CD14-positive monocyte (primary cell): ENCODE measurements at regions of chr22 and their contacts with region 1.

Region 1: DNA sequence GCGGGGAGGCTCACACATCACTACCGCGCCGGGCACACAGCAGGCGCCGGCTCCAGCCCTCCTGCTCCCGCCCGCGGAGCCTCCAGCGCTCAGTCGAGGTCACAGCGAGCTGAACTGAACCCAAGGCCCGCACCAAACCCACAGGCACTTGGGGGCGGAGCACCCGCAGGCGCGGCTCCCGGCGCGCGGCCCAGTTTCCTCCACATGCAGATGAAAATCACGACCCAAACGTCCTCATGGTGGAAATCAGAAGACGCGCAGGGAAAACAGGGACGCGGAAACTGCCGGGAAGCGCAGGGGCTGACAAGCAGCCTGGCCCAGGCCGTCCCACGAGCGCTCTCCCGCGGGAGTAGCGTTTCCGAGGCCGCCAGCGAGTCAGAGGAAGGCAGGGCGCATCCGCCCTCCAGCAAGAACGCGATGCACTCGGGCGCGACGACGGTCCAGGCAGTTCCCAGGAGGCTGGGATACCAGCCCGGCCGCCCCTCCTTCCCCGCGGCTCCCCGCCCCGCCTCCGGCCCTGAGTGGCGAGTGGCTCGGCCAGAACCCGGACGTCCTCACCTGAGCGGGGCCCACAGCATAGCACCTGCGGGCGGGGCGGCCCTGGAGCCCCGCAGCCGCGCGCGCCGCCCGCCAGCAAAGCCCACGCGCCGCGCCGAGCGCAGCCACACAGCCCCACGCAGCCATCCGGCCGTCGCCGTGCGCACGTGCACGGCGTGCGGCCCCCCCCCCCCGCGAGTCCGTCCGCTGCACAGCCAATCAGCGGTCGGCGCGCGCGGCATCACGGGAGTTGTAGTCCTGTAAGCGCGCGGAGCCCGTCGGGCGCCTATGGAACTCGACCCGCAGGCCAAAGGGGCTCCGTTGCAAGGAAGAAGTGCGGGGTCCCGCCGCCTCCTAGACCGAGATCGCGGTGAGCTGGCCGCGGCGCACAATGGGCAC is at the start of gene HDHD5:
- DNase-seq: peak; percentile 78 to 85 (median 81)
- H3K4me3 ChIP-seq: peak within 1 kb of the TSS; percentile 60 to 82 (median 62)
- H3K4me3 Mint-ChIP-seq: peak within 1 kb of the TSS; percentile 83 to 88
- H3K27ac ChIP-seq: peak within 1 kb of the TSS; percentile 80 to 86
- H3K27ac Mint-ChIP-seq: peak within 1 kb of the TSS; percentile 79 to 95 (median 91)
- H3K4me1 ChIP-seq: peaks cover 59 to 64% of the 10 kb centered on the region in 2 donors
- H3K4me1 Mint-ChIP-seq: peaks cover 57% of the 10 kb centered on the region
- H3K27me3 ChIP-seq: no peaks in the 10 kb centered on the region
- H3K27me3 Mint-ChIP-seq: peaks cover 0 to 3% (median 0%) of the 10 kb centered on the region in 3 donors
- CTCF ChIP-seq: no peak
- polyA plus RNA-seq, gene HDHD5: 75.9 to 119 (median 79.9) TPM

Region 2: DNA sequence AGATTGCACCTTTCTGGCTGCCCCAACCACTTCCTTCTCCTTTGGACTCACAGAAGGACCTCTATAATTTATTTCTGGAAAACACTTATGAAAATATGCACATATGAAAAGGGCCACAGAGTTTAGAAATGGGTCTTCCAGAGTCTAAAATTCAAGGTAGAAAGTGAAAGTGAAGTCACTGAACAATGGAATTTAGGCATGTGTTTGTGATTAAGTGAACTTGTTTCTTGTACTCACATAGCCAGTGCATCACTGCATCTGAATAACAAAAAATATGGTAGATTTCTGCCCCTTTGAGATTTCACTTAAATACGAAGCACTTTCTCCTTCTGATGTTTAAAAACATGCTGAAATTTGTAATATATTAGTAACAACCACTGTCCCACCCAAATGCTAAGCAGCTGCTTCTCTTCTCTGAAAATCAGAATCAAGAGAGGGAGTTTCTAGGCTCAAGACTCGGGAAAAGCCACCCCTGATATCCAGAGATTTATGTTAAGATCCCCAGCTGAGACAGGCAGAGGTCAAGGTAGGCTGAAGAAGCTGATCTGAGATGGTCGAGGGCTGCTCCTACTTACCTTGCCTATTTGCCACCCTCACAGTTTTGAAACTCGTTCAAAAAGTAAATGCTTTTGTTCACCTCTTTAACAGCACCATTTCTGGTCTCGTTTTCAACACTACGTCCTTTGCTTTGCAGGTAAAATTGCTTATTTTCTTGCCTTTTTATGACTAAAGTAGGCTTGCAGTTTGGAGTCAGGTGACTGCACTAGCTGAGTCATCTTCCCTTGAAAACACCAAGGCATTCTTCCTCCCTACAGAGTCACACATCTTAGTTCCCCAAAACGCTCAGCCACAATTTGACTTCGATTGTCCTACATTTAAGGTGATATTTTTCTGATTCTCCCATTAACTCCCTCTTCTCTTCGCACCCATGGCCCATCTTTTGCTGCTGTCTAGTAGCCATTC is 333.8 kb before region 1 on chr22 and contains the start of gene XKR3:
- intact Hi-C with region 1: loop called in 1 of 2 experiments (anchors 10 kb)
- DNase-seq: peak; percentile 83 to 94 (median 88)
- H3K4me3 ChIP-seq: peak within 1 kb of the TSS; percentile 30 to 91 (median 73)
- H3K4me3 Mint-ChIP-seq: peak within 1 kb of the TSS; percentile 65 to 88
- H3K27ac ChIP-seq: peak within 1 kb of the TSS; percentile 69 to 92
- H3K27ac Mint-ChIP-seq: peak within 1 kb of the TSS; percentile 88 to 93 (median 92)
- H3K4me1 ChIP-seq: peaks cover 19 to 32% of the 10 kb centered on the region in 2 donors
- H3K4me1 Mint-ChIP-seq: peaks cover 26% of the 10 kb centered on the region
- H3K27me3 ChIP-seq: no peaks in the 10 kb centered on the region
- H3K27me3 Mint-ChIP-seq: peaks cover 0 to 3% (median 0%) of the 10 kb centered on the region in 3 donors
- CTCF ChIP-seq: no peak
- polyA plus RNA-seq, gene XKR3: 0.07 TPM in 1 of 3 donors, not detected in the others

Region 3: DNA sequence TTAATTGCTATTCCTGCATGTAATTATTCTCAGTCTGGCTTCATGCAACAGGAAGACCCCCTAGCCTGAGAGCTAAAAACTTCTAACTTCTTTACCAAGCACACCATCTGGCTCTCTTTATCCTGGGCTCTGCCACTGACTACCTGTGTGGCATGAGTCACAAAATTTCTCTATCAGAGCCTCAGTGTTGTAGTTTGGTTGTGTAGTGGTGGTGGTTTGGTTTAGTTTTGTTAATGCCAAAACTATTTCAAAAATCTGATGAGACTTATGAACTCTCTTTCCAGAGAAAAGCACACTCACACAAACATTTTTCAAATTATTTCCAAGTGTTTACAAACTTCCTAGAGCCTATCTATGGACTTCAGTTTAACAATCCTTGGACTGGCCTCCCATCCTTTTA is 81.6 kb before region 1 on chr22:
- intact Hi-C with region 1: loop called in 1 of 2 experiments (anchors 5 kb)
- DNase-seq: no peak
- H3K4me3 ChIP-seq: no peak overlapping the region
- H3K4me3 Mint-ChIP-seq: no peak overlapping the region
- H3K27ac ChIP-seq: no peak overlapping the region
- H3K27ac Mint-ChIP-seq: peak overlapping the region in 4 of 7 donors; percentile 35 to 88 (median 68)
- H3K4me1 ChIP-seq: peaks cover 33 to 42% of the 10 kb centered on the region in 2 donors
- H3K4me1 Mint-ChIP-seq: peaks cover 40% of the 10 kb centered on the region
- H3K27me3 ChIP-seq: no peaks in the 10 kb centered on the region
- H3K27me3 Mint-ChIP-seq: peaks cover 2 to 5% (median 4%) of the 10 kb centered on the region in 3 donors
- CTCF ChIP-seq: no peak

Region 4: GRCh38 chr22:17084554-17085276 is 74.1 kb before region 1 on chr22 and contains the start of gene IL17RA:
- intact Hi-C with region 1: loop called (anchors 2 to 5 kb)
- DNase-seq: peak; percentile 84 to 90 (median 86)
- H3K4me3 ChIP-seq: peak within 1 kb of the TSS; percentile 89 to 91 (median 91)
- H3K4me3 Mint-ChIP-seq: peak within 1 kb of the TSS; percentile 96 to 99
- H3K27ac ChIP-seq: peak within 1 kb of the TSS; percentile 81 to 92
- H3K27ac Mint-ChIP-seq: peak within 1 kb of the TSS; percentile 90 to 96 (median 95)
- H3K4me1 ChIP-seq: peaks cover 40 to 50% of the 10 kb centered on the region in 2 donors
- H3K4me1 Mint-ChIP-seq: peaks cover 56% of the 10 kb centered on the region
- H3K27me3 ChIP-seq: no peaks in the 10 kb centered on the region
- H3K27me3 Mint-ChIP-seq: peaks cover 0 to 2% (median 0%) of the 10 kb centered on the region in 3 donors
- CTCF ChIP-seq: no peak
- polyA plus RNA-seq, gene IL17RA: 68.3 to 118 (median 96.7) TPM

Region 5: DNA sequence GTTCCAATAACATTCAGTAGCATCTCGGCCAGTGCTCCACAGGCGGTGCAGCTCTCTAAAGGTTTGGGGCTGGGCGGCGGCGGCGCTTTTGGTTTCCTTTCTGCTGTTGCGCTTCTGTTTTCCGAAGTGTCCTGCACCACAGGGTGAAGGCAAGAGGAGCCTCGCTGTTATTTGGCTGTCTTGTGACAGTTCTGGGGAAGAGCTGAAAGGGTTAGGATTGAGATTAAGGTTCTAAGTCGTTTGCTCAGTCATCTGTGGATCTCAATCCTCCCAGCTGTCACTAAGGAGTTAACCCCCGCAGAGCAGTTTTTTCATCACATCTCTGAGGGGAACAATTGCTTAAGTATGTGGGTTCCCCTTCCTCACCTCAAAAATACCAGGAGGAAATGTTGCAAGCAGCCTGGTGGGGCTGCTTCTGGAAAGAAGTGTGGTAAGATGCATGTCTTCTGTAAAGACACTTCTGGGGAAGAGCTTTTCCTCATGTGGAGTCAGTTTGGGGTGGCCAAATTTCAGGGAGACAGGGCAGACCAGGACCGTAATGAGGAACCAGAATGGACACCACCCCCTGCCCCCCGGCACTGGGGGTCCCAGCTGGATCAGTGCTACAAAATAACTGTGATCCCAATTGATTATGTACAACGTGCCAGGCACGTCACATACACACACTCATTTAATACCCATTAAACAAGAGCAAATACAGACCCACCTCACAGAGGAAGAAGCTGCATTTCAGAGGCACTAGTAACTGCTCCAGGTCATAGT is 51.9 kb before region 1 on chr22:
- intact Hi-C with region 1: loop called (anchors 2 to 5 kb)
- DNase-seq: peak; percentile 81 to 92 (median 91)
- H3K4me3 ChIP-seq: peak overlapping the region; percentile 1 to 65 (median 11)
- H3K4me3 Mint-ChIP-seq: peak overlapping the region; percentile 72 to 83
- H3K27ac ChIP-seq: peak overlapping the region; percentile 75 to 85
- H3K27ac Mint-ChIP-seq: peak overlapping the region; percentile 93 to 98 (median 96)
- H3K4me1 ChIP-seq: peaks cover 99 to 100% of the 10 kb centered on the region in 2 donors
- H3K4me1 Mint-ChIP-seq: peaks cover 85% of the 10 kb centered on the region
- H3K27me3 ChIP-seq: no peaks in the 10 kb centered on the region
- H3K27me3 Mint-ChIP-seq: peaks cover 0 to 2% (median 0%) of the 10 kb centered on the region in 3 donors
- CTCF ChIP-seq: no peak

Region 6: GRCh38 chr22:17121227-17122195 is 37.3 kb before region 1 on chr22 and contains the start of gene TMEM121B:
- intact Hi-C with region 1: loop called (anchors 2 to 5 kb)
- DNase-seq: peak; percentile 72 to 78 (median 76)
- H3K4me3 ChIP-seq: peak within 1 kb of the TSS; percentile 44 to 79 (median 56)
- H3K4me3 Mint-ChIP-seq: peak within 1 kb of the TSS; percentile 87 to 94
- H3K27ac ChIP-seq: peak within 1 kb of the TSS in 1 of 2 donors; percentile 48
- H3K27ac Mint-ChIP-seq: peak within 1 kb of the TSS in 3 of 7 donors; percentile 38 to 60 (median 58)
- H3K4me1 ChIP-seq: peaks cover 43 to 48% of the 10 kb centered on the region in 2 donors
- H3K4me1 Mint-ChIP-seq: peaks cover 44% of the 10 kb centered on the region
- H3K27me3 ChIP-seq: peaks cover 3 to 8% of the 10 kb centered on the region in 2 donors
- H3K27me3 Mint-ChIP-seq: peaks cover 0 to 21% (median 8%) of the 10 kb centered on the region in 3 donors
- CTCF ChIP-seq: no peak
- polyA plus RNA-seq, gene TMEM121B: 1.4 to 3.2 (median 1.9) TPM

Region 7: DNA sequence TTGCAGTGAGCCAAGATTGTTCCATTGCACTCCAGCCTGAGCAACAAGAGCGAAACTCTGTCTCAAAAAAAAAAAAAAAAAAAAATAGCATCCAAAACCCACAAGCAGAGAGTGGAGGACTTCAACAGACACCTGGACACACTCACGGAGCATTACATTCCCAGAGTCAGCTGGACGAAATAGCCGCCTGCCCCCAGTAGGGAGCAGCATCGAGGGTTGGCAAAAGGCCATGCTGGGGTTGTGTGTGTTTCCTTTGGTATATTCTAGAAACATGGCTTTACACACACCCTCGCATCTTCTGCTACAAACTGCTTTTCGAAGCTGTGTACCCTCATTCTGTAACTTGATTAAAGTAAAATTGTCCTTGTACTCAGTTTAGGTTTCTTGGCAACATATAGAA is 55.1 kb after region 1 on chr22:
- intact Hi-C with region 1: loop called in 1 of 2 experiments (anchors 10 kb)
- DNase-seq: peak; percentile 51 to 63 (median 52)
- H3K4me3 ChIP-seq: no peak overlapping the region
- H3K4me3 Mint-ChIP-seq: no peak overlapping the region
- H3K27ac ChIP-seq: peak overlapping the region in 1 of 2 donors; percentile 83
- H3K27ac Mint-ChIP-seq: peak overlapping the region; percentile 43 to 89 (median 85)
- H3K4me1 ChIP-seq: peaks cover 32 to 46% of the 10 kb centered on the region in 2 donors
- H3K4me1 Mint-ChIP-seq: peaks cover 41% of the 10 kb centered on the region
- H3K27me3 ChIP-seq: no peaks in the 10 kb centered on the region
- H3K27me3 Mint-ChIP-seq: peaks cover 0 to 1% (median 0%) of the 10 kb centered on the region in 3 donors
- CTCF ChIP-seq: peak; percentile 64